ENCODE measurements at regions of chr2 and their contacts with region 1.

Region 1: DNA sequence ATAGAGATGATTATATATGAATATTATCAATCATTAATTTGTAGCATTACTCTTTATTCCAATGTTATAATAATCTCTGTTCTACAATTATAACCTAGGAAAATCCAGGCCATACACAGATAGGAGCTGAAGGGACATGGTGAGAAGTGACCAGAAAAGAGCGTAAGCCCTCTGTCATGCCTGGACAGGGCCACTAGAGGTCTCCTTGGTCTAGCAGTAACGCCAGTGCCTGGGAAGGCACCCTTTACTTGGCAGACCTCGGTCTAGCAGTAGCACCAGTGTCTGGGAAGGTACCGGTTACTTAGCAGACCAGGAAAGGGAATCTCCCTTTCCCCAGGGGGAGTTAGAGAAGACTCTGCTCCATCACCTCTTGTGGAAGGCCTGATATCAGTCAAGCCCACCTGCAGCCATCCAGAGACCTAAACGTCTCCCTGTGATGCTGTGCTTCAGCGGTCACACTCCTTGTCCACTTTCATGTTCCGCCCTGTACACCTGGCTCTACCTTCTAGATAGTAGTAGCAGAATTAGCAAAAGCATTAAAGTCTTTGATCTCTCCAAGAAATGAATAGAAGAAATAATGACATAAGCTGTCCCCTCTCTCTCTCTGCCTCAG is 447.5 kb upstream of the FSIP2 start:
- DNase-seq: peak; percentile 53
- H3K4me3 ChIP-seq: no peak overlapping the region
- H3K27ac ChIP-seq: no peak overlapping the region
- H3K4me1 ChIP-seq: no peaks in the 10 kb centered on the region
- H3K27me3 ChIP-seq: no peaks in the 10 kb centered on the region
- CTCF ChIP-seq: peak; percentile 74 to 90

Region 2: GRCh38 chr2:185268651-185269050 is 22.5 kb before region 1 on chr2:
- CTCF ChIA-PET with region 1: no interaction called
- dilution Hi-C with region 1: no loop called
- in situ Hi-C with region 1: no loop called
- intact Hi-C with region 1: no loop called
- DNase-seq: no peak
- H3K4me3 ChIP-seq: no peak overlapping the region
- H3K27ac ChIP-seq: no peak overlapping the region
- H3K4me1 ChIP-seq: no peaks in the 10 kb centered on the region
- H3K27me3 ChIP-seq: no peaks in the 10 kb centered on the region
- CTCF ChIP-seq: no peak

Region 3: GRCh38 chr2:185404578-185404977 is 113.4 kb after region 1 on chr2:
- CTCF ChIA-PET with region 1: no interaction called
- dilution Hi-C with region 1: no loop called
- in situ Hi-C with region 1: no loop called
- intact Hi-C with region 1: loop called (anchors 1 kb)
- DNase-seq: no peak
- H3K4me3 ChIP-seq: no peak overlapping the region
- H3K27ac ChIP-seq: no peak overlapping the region
- H3K4me1 ChIP-seq: no peaks in the 10 kb centered on the region
- H3K27me3 ChIP-seq: no peaks in the 10 kb centered on the region
- CTCF ChIP-seq: peak in 1 of 2 donors; percentile 15

Region 4: DNA sequence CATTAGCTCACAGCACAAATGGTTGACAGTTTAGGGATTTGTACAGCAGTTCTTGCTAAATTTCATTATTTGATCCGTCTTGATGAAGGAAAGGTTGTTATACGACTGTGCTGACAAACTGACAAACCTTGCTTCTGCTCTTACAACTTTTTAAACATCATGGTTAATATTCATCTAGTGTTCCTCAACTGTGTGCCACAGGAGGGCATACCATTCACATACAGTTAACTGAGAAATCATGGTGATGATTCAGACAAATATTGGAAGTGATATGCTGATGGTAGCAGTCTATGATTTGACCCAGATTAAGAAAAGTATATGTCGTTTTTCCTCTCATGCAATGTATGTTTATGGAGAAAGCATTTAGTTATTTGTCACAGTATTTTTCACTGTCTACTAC is 317.7 kb after region 1 on chr2:
- CTCF ChIA-PET with region 1: no interaction called
- dilution Hi-C with region 1: no loop called
- in situ Hi-C with region 1: no loop called
- intact Hi-C with region 1: loop called (anchors 2 kb)
- DNase-seq: no peak
- H3K4me3 ChIP-seq: no peak overlapping the region
- H3K27ac ChIP-seq: no peak overlapping the region
- H3K4me1 ChIP-seq: no peaks in the 10 kb centered on the region
- H3K27me3 ChIP-seq: no peaks in the 10 kb centered on the region
- CTCF ChIP-seq: peak; percentile 29 to 52

Measured in mammary epithelial cell (primary cell).